ENCODE measurements at regions of chr19 and their contacts with region 1.

Region 1: GRCh38 chr19:51712460-51713083 is 11.2 kb downstream of the HAS1 start:
- DNase-seq: no peak
- ATAC-seq: peak; percentile 83
- H3K4me3 ChIP-seq: no peak overlapping the region
- H3K27ac ChIP-seq: no peak overlapping the region
- H3K4me1 ChIP-seq: no peaks in the 10 kb centered on the region
- H3K27me3 ChIP-seq: no peaks in the 10 kb centered on the region; the same call in 1 of the 2 replicates
- CTCF ChIP-seq: peak; percentile 67

Region 2: GRCh38 chr19:51777570-51778462 is 65.2 kb after region 1 on chr19:
- CTCF ChIA-PET with region 1: no interaction called
- POLR2A ChIA-PET with region 1: no interaction called
- in situ Hi-C with region 1: no loop called
- intact Hi-C with region 1: loop called (anchors 5 kb)
- DNase-seq: peak; percentile 18
- ATAC-seq: peak; percentile 92
- H3K4me3 ChIP-seq: peak overlapping the region in 1 of 2 experiments; percentile 26; a peak in 2 of 4 replicates
- H3K27ac ChIP-seq: no peak overlapping the region
- H3K4me1 ChIP-seq: no peaks in the 10 kb centered on the region
- H3K27me3 ChIP-seq: 0 out of 2 replicates have a peak, but pooled peaks cover 2% of the 10 kb centered on the region
- CTCF ChIP-seq: peak; percentile 78

Region 3: DNA sequence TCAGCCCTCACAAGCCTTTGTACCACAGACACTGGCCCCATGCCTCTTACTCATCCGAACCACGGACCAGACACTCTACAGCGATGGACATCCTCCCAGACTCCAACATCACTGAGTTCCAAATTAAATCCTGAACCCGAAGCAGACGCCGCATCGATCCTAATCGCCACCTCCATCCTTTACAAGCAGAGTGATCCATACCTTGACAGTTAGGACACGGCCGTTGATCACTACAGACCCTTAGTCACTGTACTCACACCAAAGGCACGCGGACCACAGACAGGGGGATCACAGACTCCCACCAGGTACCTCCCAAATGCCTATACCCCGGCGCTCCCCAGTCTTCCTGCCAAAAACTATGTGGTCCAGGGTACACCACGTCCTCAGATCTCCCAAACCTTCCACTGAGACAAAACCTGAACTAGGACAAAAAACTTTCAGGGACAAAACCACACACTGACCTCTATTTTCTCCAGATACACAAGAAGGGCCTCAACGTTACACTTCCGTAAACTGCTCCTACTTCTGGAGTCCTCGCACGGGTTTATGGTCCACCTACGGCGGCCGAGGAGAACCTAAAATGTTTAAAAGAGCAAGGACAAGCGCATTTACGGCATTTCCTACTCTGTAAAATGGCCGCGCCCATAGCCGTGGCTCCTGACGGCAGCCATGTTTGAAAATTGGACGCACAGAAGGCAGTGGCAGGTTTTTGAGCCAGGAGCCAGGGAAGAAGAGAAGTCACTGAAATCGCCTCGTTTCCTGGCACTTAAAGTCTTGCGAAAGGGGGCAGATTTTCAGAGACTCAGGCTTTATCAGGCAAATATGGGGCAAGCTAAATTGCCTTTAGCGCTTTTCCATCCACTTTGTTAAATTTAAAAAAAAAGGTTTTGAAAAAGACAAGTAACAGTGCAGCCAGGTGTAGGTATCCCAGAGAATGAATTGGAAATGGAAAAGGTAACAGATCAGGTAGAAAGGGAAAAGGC is 274.0 kb after region 1 on chr19 and contains the start of gene ZNF350:
- CTCF ChIA-PET with region 1: no interaction called
- POLR2A ChIA-PET with region 1: no interaction called
- in situ Hi-C with region 1: no loop called
- intact Hi-C with region 1: no loop called
- DNase-seq: peak; percentile 68
- ATAC-seq: peak; percentile 100
- H3K4me3 ChIP-seq: peak within 1 kb of the TSS; percentile 91 to 95
- H3K27ac ChIP-seq: peak within 1 kb of the TSS; percentile 84
- H3K4me1 ChIP-seq: no peaks in the 10 kb centered on the region
- H3K27me3 ChIP-seq: no peaks in the 10 kb centered on the region
- CTCF ChIP-seq: no peak
- total RNA-seq, gene ZNF350: 5.1 TPM

Measured in Panc1 (cell line).